AG04450 (cell line): ENCODE measurements at regions of chr1 and their contacts with region 1.

Region 1: DNA sequence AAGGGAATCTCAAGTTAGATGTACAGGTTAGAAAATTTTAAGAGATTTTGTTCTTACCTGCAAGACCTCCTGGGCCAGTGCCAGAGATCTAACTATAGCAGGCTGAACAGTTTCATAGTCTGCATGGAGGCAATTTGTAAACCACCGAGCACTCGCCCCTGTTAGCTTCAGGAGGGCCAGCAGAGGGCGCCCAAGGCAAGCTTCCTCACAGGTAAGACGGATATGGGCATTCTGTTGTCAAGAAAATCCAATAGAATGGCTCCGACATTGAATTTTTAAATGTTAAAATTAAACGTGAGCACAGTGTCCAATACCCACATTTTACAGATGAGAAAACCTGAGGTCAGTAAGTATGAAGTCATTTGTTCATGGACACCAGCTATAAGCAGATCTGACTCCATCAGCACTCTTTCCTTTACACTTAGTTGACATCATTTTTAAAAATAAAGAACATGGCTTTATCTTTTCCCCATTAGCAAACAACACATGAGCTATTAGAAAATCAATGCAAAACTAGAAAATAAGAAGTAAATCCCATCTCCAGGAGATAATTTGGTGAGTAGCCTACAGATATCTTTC is 2.2 kb downstream of the REG4 start:
- DNase-seq: peak; percentile 47
- H3K4me3 ChIP-seq: no peak overlapping the region
- H3K27ac ChIP-seq: no peak overlapping the region
- H3K27me3 ChIP-seq: peaks cover 8% of the 10 kb centered on the region
- CTCF ChIP-seq: peak; percentile 94

Region 2: GRCh38 chr1:119743781-119744597 is 65.1 kb before region 1 on chr1:
- CTCF ChIA-PET with region 1: interaction called, 31 read pairs
- POLR2A ChIA-PET with region 1: no interaction called
- DNase-seq: peak; percentile 67
- H3K4me3 ChIP-seq: no peak overlapping the region
- H3K27ac ChIP-seq: no peak overlapping the region
- H3K27me3 ChIP-seq: no peaks in the 10 kb centered on the region
- CTCF ChIP-seq: peak; percentile 85

Region 3: DNA sequence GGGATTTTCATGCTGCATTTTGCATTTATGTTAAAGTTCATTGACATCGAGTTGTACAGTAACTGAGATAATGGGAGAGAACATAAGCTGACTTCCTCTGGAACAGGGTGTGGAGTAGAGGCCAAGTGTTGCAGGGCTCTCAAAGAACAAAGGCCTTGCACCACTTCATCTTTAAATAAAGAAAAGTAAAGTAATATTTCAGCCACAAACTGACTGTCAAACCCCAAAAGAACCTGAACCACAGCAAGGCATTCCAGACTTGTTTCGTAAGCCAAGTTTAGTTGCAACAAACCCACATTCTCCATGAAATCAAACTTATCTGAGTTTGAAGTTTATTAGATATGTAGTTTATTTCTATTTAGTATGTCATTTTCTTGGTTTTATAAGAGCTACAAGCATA is 21.3 kb before region 1 on chr1:
- CTCF ChIA-PET with region 1: interaction called, 13 read pairs
- POLR2A ChIA-PET with region 1: no interaction called
- DNase-seq: no peak
- H3K4me3 ChIP-seq: no peak overlapping the region
- H3K27ac ChIP-seq: no peak overlapping the region
- H3K27me3 ChIP-seq: peaks cover 3% of the 10 kb centered on the region
- CTCF ChIP-seq: no peak

Region 4: DNA sequence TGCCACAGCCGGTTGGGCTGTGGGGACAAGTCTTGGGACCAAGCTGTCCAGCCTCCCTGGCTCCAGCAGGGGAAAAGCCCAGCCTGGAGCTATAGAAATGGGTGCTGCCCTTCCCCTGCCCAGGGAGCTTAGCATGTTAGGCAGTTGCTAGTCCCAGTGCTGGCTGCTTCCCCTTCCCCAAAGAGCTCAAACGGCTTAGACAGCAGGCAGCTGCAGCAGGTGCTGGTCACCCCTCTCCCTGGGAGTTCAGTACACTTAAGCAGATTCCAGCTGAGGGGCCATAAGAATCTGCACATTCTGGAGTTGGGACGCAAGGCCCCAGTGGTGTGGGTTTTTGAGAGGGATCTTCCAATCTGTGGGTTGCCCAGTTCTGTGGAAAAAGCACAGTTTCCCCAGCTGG is 13.3 kb after region 1 on chr1:
- CTCF ChIA-PET with region 1: interaction called, 16 read pairs
- POLR2A ChIA-PET with region 1: no interaction called
- DNase-seq: no peak
- H3K4me3 ChIP-seq: no peak overlapping the region
- H3K27ac ChIP-seq: no peak overlapping the region
- H3K27me3 ChIP-seq: peaks cover 9% of the 10 kb centered on the region
- CTCF ChIP-seq: no peak

Region 5: DNA sequence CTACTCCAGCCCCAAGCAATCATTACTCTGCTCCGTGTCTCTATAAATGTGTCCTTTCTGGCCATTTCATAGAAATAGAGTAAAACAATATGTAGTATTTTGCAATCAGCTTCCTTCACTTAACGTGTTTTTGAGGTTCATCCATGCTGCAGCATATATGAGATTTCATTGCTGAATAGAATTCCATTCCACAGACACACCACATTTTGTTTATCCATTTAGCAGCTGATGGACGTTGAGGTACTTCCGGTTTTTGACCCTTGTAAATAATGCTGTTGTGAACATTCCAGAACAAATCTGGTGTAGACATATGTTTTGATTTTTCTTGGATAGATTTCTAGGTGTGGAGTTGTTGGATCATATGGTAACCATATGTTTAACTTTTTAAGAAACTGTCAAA is 56.6 kb after region 1 on chr1:
- CTCF ChIA-PET with region 1: interaction called, 13 read pairs
- POLR2A ChIA-PET with region 1: no interaction called
- DNase-seq: peak; percentile 88
- H3K4me3 ChIP-seq: no peak overlapping the region
- H3K27ac ChIP-seq: peak overlapping the region; percentile 47
- H3K27me3 ChIP-seq: no peaks in the 10 kb centered on the region
- CTCF ChIP-seq: no peak